ENCODE measurements at regions of chr5 and their contacts with region 1.

Region 1: DNA sequence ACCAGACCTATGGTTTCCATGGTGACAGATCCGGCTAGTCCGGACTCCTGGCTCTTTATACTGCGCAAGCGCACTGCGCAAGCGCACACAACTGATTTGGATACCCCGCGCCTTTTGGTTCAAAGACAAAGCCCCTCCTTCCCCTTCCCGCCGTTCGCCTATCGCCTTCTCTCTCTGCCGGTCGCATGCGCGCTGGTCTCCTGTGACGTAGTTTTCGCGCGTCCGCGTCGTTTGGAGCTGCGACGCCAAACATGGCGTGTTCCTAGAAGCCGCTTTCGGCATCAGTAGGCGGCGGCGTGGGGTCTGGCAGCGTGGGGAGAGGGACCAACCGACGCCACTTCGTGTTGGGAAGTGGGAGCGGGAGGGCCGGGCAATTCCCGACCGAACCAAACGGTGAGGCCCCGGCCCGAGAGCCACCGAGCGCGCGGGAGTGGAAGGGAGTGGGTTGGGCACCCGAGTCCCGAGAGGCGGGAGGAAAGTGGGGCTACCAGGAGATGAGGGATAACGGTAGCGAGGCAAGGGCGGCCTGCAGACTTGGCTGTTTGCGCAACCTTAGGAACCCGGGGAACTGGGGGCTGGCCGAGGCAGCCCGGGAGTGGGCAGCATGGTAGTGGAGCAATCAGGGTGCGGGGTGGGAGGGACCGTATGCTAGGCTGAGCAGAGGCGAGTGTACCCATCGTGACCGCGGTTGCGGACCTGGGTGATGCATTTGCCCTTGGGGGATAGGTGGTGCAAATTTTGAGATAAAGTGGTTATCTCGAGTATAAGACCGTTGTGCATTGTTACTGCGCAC is at the start of gene IPO11:
- DNase-seq: peak; percentile 98 to 99 (median 98)
- H3K4me3 ChIP-seq: peak within 1 kb of the TSS; percentile 82 to 87
- H3K4me3 Mint-ChIP-seq: peak within 1 kb of the TSS; percentile 82 to 97 (median 93)
- H3K27ac ChIP-seq: peak within 1 kb of the TSS; percentile 68
- H3K27ac Mint-ChIP-seq: peak within 1 kb of the TSS; percentile 88 to 98 (median 95)
- H3K4me1 ChIP-seq: peaks cover 17% of the 10 kb centered on the region
- H3K4me1 Mint-ChIP-seq: peaks cover 19 to 31% (median 23%) of the 10 kb centered on the region in 4 donors
- H3K27me3 ChIP-seq: no peaks in the 10 kb centered on the region
- H3K27me3 Mint-ChIP-seq: no peaks in the 10 kb centered on the region
- total RNA-seq, gene IPO11: 23.8 to 28.5 TPM

Region 2: GRCh38 chr5:62578540-62578939 is 165.8 kb after region 1 on chr5 and contains the start of gene LRRC70:
- CTCF ChIA-PET with region 1: no interaction called
- POLR2A ChIA-PET with region 1: no interaction called
- intact Hi-C with region 1: loop called (anchors 5 kb)
- DNase-seq: peak; percentile 43 to 87 (median 82)
- H3K4me3 ChIP-seq: no peak within 1 kb of the TSS
- H3K4me3 Mint-ChIP-seq: peak within 1 kb of the TSS; percentile 71 to 87 (median 80)
- H3K27ac ChIP-seq: peak within 1 kb of the TSS; percentile 20
- H3K27ac Mint-ChIP-seq: peak within 1 kb of the TSS; percentile 71 to 98 (median 92)
- H3K4me1 ChIP-seq: peaks cover 22% of the 10 kb centered on the region
- H3K4me1 Mint-ChIP-seq: peaks cover 21 to 36% (median 30%) of the 10 kb centered on the region in 4 donors
- H3K27me3 ChIP-seq: no peaks in the 10 kb centered on the region
- H3K27me3 Mint-ChIP-seq: no peaks in the 10 kb centered on the region
- total RNA-seq, gene LRRC70: 0.83 to 1.4 TPM